ENCODE measurements at regions of chr5 and their contacts with region 1.

Region 1: DNA sequence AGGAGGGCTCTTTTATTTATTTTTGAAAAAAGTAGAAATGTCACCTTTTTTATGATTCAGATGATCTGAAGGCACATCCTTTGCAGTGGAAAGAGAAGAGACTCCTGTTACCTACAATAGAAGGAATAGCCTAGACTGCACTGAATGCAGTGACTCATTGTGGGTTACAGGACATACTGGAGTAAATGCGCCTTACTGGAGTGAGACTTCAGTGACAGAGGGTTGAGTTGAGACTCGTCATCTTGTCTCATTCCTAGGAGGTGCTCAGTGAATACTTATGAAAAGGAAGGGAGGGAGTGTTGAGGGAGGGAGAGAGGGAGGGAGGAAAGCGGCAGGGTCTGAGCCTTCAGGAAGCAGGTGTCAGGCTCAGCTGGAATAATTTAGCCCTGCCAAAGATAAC is 25.2 kb downstream of the ANKRA2 start:
- DNase-seq: no peak
- ATAC-seq: no peak
- H3K4me3 ChIP-seq: no peak overlapping the region
- H3K4me3 Mint-ChIP-seq: no peak overlapping the region
- H3K27ac ChIP-seq: no peak overlapping the region
- H3K27ac Mint-ChIP-seq: no peak overlapping the region
- H3K4me1 ChIP-seq: no peaks in the 10 kb centered on the region
- H3K4me1 Mint-ChIP-seq: peaks cover 0 to 15% (median 0%) of the 10 kb centered on the region in 7 donors
- H3K27me3 ChIP-seq: no peaks in the 10 kb centered on the region
- H3K27me3 Mint-ChIP-seq: peaks cover 3 to 33% (median 25%) of the 10 kb centered on the region in 5 donors

Region 2: GRCh38 chr5:73088026-73088425 is 452.2 kb before region 1 on chr5:
- CTCF ChIA-PET with region 1: no interaction called
- POLR2A ChIA-PET with region 1: no interaction called
- intact Hi-C with region 1: loop called in 1 of 2 experiments (anchors 2 kb)
- DNase-seq: no peak
- ATAC-seq: no peak
- H3K4me3 ChIP-seq: no peak overlapping the region
- H3K4me3 Mint-ChIP-seq: no peak overlapping the region
- H3K27ac ChIP-seq: no peak overlapping the region
- H3K27ac Mint-ChIP-seq: no peak overlapping the region
- H3K4me1 ChIP-seq: no peaks in the 10 kb centered on the region
- H3K4me1 Mint-ChIP-seq: no peaks in the 10 kb centered on the region
- H3K27me3 ChIP-seq: peaks cover 0 to 3% of the 10 kb centered on the region in 2 donors
- H3K27me3 Mint-ChIP-seq: peaks cover 7 to 28% (median 15%) of the 10 kb centered on the region in 5 donors

Region 3: GRCh38 chr5:73256862-73257261 is 283.3 kb before region 1 on chr5:
- CTCF ChIA-PET with region 1: no interaction called
- POLR2A ChIA-PET with region 1: no interaction called
- intact Hi-C with region 1: no loop called
- DNase-seq: no peak
- ATAC-seq: no peak
- H3K4me3 ChIP-seq: no peak overlapping the region
- H3K4me3 Mint-ChIP-seq: no peak overlapping the region
- H3K27ac ChIP-seq: no peak overlapping the region
- H3K27ac Mint-ChIP-seq: no peak overlapping the region
- H3K4me1 ChIP-seq: no peaks in the 10 kb centered on the region
- H3K4me1 Mint-ChIP-seq: no peaks in the 10 kb centered on the region
- H3K27me3 ChIP-seq: no peaks in the 10 kb centered on the region
- H3K27me3 Mint-ChIP-seq: peaks cover 24 to 75% (median 62%) of the 10 kb centered on the region in 5 donors

Region 4: GRCh38 chr5:73454351-73455036 is 85.7 kb before region 1 on chr5:
- CTCF ChIA-PET with region 1: no interaction called
- POLR2A ChIA-PET with region 1: no interaction called
- intact Hi-C with region 1: loop called in 1 of 2 experiments (anchors 2 kb)
- DNase-seq: peak in 4 of 9 donors; percentile 42 to 49 (median 45)
- ATAC-seq: peak; percentile 86
- H3K4me3 ChIP-seq: no peak overlapping the region
- H3K4me3 Mint-ChIP-seq: no peak overlapping the region
- H3K27ac ChIP-seq: no peak overlapping the region
- H3K27ac Mint-ChIP-seq: no peak overlapping the region
- H3K4me1 ChIP-seq: peaks cover 0 to 4% of the 10 kb centered on the region in 2 donors
- H3K4me1 Mint-ChIP-seq: peaks cover 2 to 12% (median 7%) of the 10 kb centered on the region in 7 donors
- H3K27me3 ChIP-seq: peaks cover 35 to 49% of the 10 kb centered on the region in 2 donors
- H3K27me3 Mint-ChIP-seq: peaks cover 75 to 84% (median 80%) of the 10 kb centered on the region in 5 donors

Region 5: GRCh38 chr5:73519531-73520283 is 20.5 kb before region 1 on chr5:
- CTCF ChIA-PET with region 1: interaction called, 38 read pairs
- POLR2A ChIA-PET with region 1: no interaction called
- intact Hi-C with region 1: loop called (anchors 1 kb)
- DNase-seq: peak; percentile 29 to 82 (median 80)
- ATAC-seq: peak; percentile 99
- H3K4me3 ChIP-seq: no peak overlapping the region
- H3K4me3 Mint-ChIP-seq: peak overlapping the region in 8 of 10 donors; percentile 55 to 72 (median 66)
- H3K27ac ChIP-seq: no peak overlapping the region
- H3K27ac Mint-ChIP-seq: peak overlapping the region in 8 of 9 donors; percentile 20 to 86 (median 66)
- H3K4me1 ChIP-seq: no peaks in the 10 kb centered on the region
- H3K4me1 Mint-ChIP-seq: peaks cover 8 to 9% (median 9%) of the 10 kb centered on the region in 7 donors
- H3K27me3 ChIP-seq: no peaks in the 10 kb centered on the region
- H3K27me3 Mint-ChIP-seq: peaks cover 0 to 2% (median 0%) of the 10 kb centered on the region in 5 donors

Measured in naive thymus-derived CD4-positive, alpha-beta T cell (primary cell).